Posterior cingulate gyrus (tissue), 11 donors: ENCODE measurements at regions of chr13 and their contacts with region 1.

Region 1: DNA sequence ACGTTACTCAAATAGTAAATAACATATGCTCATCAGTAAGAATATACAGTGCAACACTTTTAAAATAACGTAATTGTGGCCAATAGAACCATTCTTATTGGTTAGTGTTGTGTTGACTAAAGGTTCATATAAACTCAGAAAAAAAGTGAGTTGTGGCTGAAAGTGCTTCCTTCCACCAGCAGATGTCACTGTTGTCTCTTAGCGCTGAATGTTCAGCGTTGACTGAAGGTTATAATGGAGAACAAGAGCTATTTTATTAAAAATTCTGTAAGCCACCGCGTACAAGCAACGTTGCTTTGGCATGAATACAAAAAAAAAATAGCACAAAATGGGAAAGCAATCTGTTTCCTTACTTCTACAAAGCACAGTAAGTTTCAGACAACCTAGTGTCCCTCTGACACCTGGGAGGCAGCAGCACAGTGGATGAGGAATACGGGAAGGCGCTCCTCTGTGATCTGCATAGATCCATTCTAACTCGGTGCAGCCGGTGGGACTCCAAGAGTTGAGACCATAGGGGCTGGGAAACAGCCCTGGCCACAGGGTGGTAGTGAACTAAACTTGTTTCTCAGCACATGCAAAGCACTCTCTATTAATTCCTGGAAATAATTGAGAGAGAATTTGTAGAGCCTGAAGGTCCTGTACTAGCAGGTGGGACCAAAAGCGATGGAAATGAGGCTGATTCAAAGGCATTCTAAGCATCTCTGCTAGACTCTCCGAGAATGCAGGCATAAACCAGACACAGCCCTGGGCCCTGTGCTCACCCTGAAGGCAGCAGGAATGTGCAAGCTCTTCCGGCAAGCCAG is 24.0 kb upstream of the OXGR1 start:
- DNase-seq: peak in 4 of 10 donors; percentile 36 to 47 (median 46)

Region 2: GRCh38 chr13:97165502-97166425 is 147.5 kb after region 1 on chr13:
- intact Hi-C with region 1: no loop called
- DNase-seq: no peak

Region 3: GRCh38 chr13:97359181-97360057 is 341.2 kb after region 1 on chr13:
- intact Hi-C with region 1: loop called (anchors 5 kb)
- DNase-seq: peak in 5 of 10 donors; percentile 34 to 86 (median 44)

Region 4: DNA sequence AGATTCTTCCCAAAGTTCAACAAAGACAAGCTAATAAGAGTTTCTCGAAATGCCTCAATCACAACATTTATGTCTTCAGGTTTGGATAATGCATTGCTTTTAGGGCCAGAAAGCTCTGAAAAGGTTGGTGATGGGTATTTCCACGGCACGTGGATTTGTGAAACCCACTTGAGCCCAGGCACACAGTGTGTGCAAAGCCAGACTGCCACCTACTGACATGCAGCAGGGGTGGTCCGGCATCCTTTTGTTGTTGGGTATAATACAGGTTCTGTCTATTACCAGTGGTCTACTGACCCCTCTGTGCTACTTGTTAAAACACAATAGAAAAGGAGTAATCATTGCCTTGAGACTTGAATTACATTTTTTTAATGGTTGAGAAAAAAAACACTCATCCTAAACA is 641.4 kb after region 1 on chr13:
- intact Hi-C with region 1: loop called (anchors 1 kb)
- DNase-seq: peak in 7 of 10 donors; percentile 29 to 88 (median 35)

Region 5: DNA sequence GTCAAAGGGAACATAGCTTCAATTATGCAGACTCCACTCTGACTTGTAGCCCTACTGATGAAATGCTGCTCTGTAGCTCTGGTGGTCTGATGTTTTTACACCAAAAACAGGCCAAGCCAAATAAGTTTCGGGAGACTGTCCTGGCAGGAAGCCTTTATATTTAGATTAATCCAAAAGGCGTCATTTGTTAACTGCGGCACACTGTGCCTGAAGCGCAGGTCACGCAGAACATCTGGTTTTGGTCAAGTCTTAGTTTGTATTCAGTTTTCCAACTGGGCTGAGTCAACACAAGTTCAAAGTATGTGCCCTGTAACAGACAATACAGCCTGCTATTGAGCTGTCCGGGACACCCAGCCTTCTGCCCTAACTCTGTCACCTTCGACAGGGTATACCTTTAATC is 780.6 kb after region 1 on chr13:
- intact Hi-C with region 1: loop called (anchors 5 kb)
- DNase-seq: no peak